H1 (cell line): ENCODE measurements at regions of chr12 and their contacts with region 1.

Region 1: DNA sequence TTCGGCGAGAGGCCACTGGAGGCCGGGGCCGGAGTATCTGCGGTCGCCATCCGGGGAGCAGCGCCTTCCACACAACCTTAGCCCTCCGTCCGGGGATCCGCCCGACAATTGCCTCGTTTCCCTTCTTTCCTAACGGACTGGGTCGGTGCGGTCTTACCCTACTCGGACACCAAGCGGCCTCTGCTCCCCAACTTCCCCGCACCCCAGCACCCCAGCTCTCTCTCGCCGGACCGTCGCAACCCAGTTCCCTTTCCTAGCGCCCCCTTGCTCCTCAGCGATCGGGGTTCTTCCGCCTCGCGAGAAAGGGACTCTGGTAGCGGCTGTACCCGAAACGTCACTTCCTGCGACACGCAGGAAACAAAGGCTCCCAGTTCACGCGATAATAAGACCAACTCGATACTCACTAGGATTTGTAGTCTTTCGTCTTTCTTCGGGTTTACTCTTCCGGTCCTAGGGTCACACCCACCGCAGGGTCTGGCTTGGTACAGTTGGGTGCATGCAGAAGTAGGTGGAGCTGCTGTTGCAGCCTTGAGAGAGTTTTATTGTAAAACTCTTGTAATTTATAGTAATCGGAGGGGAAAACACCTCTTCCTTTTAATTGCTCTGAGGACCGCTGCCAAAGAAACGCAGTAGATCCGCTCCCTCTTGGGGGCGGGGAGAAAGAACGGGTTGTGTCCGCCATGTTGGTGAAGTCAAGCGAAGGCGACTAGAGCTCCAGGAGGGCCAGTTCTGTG is at the start of gene ZFC3H1:
- DNase-seq: peak; percentile 79 to 87
- H3K4me3 ChIP-seq: peak within 1 kb of the TSS; percentile 84 to 98 (median 94)
- H3K27ac ChIP-seq: peak within 1 kb of the TSS; percentile 98
- H3K4me1 ChIP-seq: no peaks in the 10 kb centered on the region; a peak in 1 of 7 replicates
- H3K27me3 ChIP-seq: no peaks in the 10 kb centered on the region
- CTCF ChIP-seq: peak in 1 of 3 experiments; percentile 27; a peak in 1 of 4 replicates
- EP300 ChIP-seq: no peak
- POLR2A ChIP-seq: peak; percentile 3 to 83
- RAD21 ChIP-seq: no peak
- total RNA-seq, gene ZFC3H1: 29.7 and 32.4 TPM in 2 replicates

Region 2: DNA sequence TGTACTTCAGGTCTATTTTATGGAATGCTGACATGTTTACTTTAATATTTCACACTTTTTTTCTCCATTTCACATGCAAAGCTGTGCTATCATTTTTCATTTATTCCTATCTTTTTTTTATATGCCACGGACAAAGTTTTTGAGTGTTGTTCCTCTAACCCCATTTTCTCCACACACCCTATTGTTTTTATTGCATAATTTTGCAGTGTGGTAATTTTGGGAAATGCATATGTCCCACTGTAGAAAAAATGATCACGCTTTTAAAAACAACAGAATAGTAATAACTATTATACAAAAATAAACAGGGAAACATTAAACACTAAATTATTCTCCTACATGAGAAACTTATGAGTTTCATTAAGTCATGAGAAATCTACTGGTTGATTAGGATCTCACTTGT is 14.3 kb before region 1 on chr12:
- CTCF ChIA-PET with region 1: no interaction called
- POLR2A ChIA-PET with region 1: interaction called, 11 read pairs
- DNase-seq: no peak
- H3K4me3 ChIP-seq: no peak overlapping the region
- H3K27ac ChIP-seq: no peak overlapping the region
- H3K4me1 ChIP-seq: no peaks in the 10 kb centered on the region
- H3K27me3 ChIP-seq: no peaks in the 10 kb centered on the region
- CTCF ChIP-seq: no peak
- EP300 ChIP-seq: no peak
- POLR2A ChIP-seq: no peak
- RAD21 ChIP-seq: no peak

Region 3: DNA sequence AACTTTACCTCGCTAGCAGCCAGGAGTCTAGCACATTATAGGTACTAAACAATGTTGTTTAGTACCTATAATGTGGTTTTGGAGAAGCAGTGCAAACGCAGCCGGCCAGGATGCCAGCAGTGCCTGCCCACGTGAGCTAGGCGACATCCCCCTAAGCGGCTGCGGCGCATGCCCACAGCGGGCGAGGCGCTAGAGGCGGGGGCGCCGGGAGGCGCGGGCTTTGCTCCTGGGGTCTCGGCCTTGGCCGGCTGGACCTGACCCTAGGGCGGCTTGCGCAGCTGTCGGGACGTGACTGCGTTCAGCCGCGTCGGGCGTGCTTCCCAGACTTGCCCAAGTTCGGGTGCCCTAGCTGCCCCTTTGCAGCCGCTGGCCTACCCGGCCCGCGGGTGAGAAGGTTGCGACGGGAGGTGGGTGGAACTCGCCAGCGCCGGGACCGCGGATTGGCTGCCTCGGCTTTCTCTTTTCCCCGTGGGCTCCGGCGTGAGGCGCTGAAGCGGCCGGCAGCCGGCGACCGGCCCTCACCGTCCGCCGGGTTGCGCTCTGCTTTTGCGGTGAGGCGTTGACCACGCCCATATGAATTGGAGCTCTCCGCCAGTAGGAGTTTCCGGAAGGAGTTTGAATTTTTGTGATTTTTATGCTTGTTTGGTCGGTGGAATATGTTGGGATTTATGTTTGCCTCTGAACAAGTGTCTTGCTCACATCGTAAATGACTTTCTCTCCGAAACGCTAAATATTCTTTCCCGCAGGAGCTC is 22.4 kb after region 1 on chr12 and contains the start of gene TMEM19:
- CTCF ChIA-PET with region 1: interaction called, 21 read pairs
- POLR2A ChIA-PET with region 1: interaction called, 81 read pairs
- DNase-seq: peak; percentile 49 to 86
- H3K4me3 ChIP-seq: peak within 1 kb of the TSS; percentile 46 to 78 (median 70)
- H3K27ac ChIP-seq: peak within 1 kb of the TSS; percentile 89
- H3K4me1 ChIP-seq: no peaks in the 10 kb centered on the region
- H3K27me3 ChIP-seq: no peaks in the 10 kb centered on the region
- CTCF ChIP-seq: peak; percentile 1 to 20 (median 6); a peak in 3 of 4 replicates
- EP300 ChIP-seq: no peak
- POLR2A ChIP-seq: peak; percentile 74 to 90
- RAD21 ChIP-seq: no peak; a peak in 2 of 4 replicates
- total RNA-seq, gene TMEM19: 12.6 and 14.7 TPM in 2 replicates

Region 4: DNA sequence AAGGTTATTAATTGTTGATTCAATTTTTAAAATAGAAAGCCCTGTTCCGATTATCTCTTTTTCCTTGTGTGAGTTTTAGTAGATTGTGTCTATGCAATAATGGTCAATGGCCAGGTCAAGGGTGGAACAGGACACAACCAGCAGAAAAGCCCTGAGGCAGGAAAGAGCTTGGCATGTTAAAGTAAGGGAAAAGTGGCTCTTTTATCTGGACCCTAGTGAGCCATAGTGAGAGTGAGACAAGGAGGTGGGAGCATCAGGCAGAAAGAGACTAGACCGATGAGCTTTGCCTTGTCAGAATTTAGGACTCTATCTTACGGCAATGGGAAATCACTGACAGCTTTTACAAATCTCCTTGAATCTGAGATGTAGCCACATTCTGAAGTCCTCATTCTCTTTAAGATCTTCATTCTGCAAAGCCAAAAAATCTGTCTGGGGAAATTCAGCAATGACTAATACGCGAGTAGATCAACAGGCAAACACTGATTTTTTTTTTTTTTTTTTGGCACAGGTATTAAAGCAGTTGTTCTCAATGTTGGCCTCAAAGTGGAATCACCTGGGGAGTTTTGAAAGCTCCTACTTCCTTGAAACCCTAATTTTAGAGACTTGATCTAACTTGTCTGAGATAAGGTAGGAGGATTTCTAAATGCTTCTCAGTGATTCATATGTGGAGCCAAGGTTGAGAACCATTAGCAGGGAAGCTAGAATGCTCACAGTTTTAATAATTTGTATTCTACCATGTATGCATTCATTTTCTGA is 56.1 kb after region 1 on chr12:
- CTCF ChIA-PET with region 1: no interaction called
- POLR2A ChIA-PET with region 1: no interaction called
- DNase-seq: no peak
- H3K4me3 ChIP-seq: no peak overlapping the region
- H3K27ac ChIP-seq: no peak overlapping the region
- H3K4me1 ChIP-seq: no peaks in the 10 kb centered on the region
- H3K27me3 ChIP-seq: no peaks in the 10 kb centered on the region
- CTCF ChIP-seq: no peak
- EP300 ChIP-seq: no peak
- POLR2A ChIP-seq: no peak
- RAD21 ChIP-seq: no peak

Region 5: GRCh38 chr12:71754461-71755145 is 90.9 kb after region 1 on chr12 and contains the start of gene RAB21:
- CTCF ChIA-PET with region 1: interaction called, 4 read pairs
- POLR2A ChIA-PET with region 1: interaction called, 17 read pairs
- DNase-seq: peak; percentile 93 to 98
- H3K4me3 ChIP-seq: peak within 1 kb of the TSS; percentile 85 to 99 (median 92)
- H3K27ac ChIP-seq: peak within 1 kb of the TSS; percentile 94
- H3K4me1 ChIP-seq: peaks cover 0 to 12% (median 2%) of the 10 kb centered on the region in 4 experiments; a peak in 4 of 7 replicates
- H3K27me3 ChIP-seq: no peaks in the 10 kb centered on the region
- CTCF ChIP-seq: no peak
- EP300 ChIP-seq: peak in 1 of 2 experiments; percentile 46; a peak in 1 of 3 replicates
- POLR2A ChIP-seq: peak; percentile 91 to 96
- RAD21 ChIP-seq: no peak
- total RNA-seq, gene RAB21: 44.1 and 47.2 TPM in 2 replicates

Region 6: DNA sequence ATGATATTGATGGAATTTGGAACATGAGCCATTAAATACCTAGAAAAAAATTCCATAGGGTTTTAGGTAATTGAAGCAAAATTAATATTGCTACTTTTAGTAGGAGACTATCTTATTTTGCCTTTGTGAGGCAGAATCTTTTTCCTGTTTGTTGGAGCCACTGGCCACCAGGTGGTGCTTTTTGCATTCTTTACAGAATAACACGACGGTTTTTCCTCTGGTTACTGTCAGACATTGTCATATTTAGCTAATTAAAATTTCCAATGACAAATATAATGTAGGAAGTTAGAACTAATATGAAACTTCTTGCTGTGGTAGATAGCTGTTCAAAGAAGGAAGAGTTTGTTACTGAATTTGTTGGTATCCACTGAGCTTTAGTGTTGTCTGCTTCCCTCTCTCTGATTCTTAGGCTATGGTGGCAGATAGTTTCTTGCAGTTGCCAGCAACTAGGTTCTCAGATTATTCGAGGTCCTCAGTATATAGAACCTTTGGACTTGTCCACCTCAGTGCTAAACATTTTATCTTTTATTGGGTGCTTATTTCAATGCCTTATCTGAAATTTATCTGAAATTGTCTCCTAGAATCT is 116.6 kb after region 1 on chr12:
- CTCF ChIA-PET with region 1: no interaction called
- POLR2A ChIA-PET with region 1: no interaction called
- DNase-seq: no peak
- H3K4me3 ChIP-seq: no peak overlapping the region
- H3K27ac ChIP-seq: no peak overlapping the region
- H3K4me1 ChIP-seq: no peaks in the 10 kb centered on the region
- H3K27me3 ChIP-seq: no peaks in the 10 kb centered on the region
- CTCF ChIP-seq: peak in 2 of 3 experiments; percentile 58 to 65; a peak in 3 of 4 replicates
- EP300 ChIP-seq: no peak
- POLR2A ChIP-seq: no peak
- RAD21 ChIP-seq: peak; percentile 61 to 70

Region 7: GRCh38 chr12:71972441-71973074 is 308.8 kb after region 1 on chr12:
- CTCF ChIA-PET with region 1: no interaction called
- POLR2A ChIA-PET with region 1: no interaction called
- DNase-seq: no peak
- H3K4me3 ChIP-seq: no peak overlapping the region
- H3K27ac ChIP-seq: no peak overlapping the region
- H3K4me1 ChIP-seq: peaks cover 0 to 8% (median 2%) of the 10 kb centered on the region in 4 experiments; a peak in 3 of 7 replicates
- H3K27me3 ChIP-seq: no peaks in the 10 kb centered on the region; a peak in 1 of 7 replicates
- CTCF ChIP-seq: peak in 1 of 3 experiments; percentile 38; a peak in 2 of 4 replicates
- EP300 ChIP-seq: no peak
- POLR2A ChIP-seq: no peak
- RAD21 ChIP-seq: peak; percentile 24 to 50; a peak in 3 of 4 replicates